ENCODE measurements at regions of chr1 and their contacts with region 1.

Region 1: GRCh38 chr1:12040457-12041051 is 21.3 kb downstream of the MIIP start:
- DNase-seq: peak; percentile 79
- ATAC-seq: peak; percentile 80
- H3K4me3 ChIP-seq: peak overlapping the region; percentile 21; the same call in 1 of the 2 replicates
- H3K27ac ChIP-seq: peak overlapping the region; percentile 68
- H3K4me1 ChIP-seq: peaks cover 53% of the 10 kb centered on the region
- H3K27me3 ChIP-seq: no peaks in the 10 kb centered on the region
- CTCF ChIP-seq: no peak
- EP300 ChIP-seq: peak; percentile 51 to 60; a peak in 3 of 4 replicates
- POLR2A ChIP-seq: peak; percentile 46; the same call in 1 of the 2 replicates
- RAD21 ChIP-seq: peak; percentile 9; the same call in 1 of the 2 replicates

Region 2: GRCh38 chr1:12001249-12001917 is 39.2 kb before region 1 on chr1:
- CTCF ChIA-PET with region 1: interaction called, 4 read pairs
- POLR2A ChIA-PET with region 1: interaction called, 4 read pairs
- RAD21 ChIA-PET with region 1: interaction called, 13 read pairs
- SMC1A ChIA-PET with region 1: interaction called, 5 read pairs
- in situ Hi-C with region 1: no loop called
- intact Hi-C with region 1: no loop called
- DNase-seq: no peak
- ATAC-seq: peak; percentile 27
- H3K4me3 ChIP-seq: no peak overlapping the region
- H3K27ac ChIP-seq: no peak overlapping the region
- H3K4me1 ChIP-seq: peaks cover 22% of the 10 kb centered on the region
- H3K27me3 ChIP-seq: no peaks in the 10 kb centered on the region
- CTCF ChIP-seq: peak; percentile 64 to 73 (median 67)
- EP300 ChIP-seq: no peak
- POLR2A ChIP-seq: no peak
- RAD21 ChIP-seq: peak; percentile 70

Region 3: GRCh38 chr1:12019858-12020509 is 20.6 kb before region 1 on chr1:
- CTCF ChIA-PET with region 1: interaction called, 26 read pairs
- POLR2A ChIA-PET with region 1: interaction called, 49 read pairs
- RAD21 ChIA-PET with region 1: interaction called, 37 read pairs
- SMC1A ChIA-PET with region 1: interaction called, 36 read pairs
- in situ Hi-C with region 1: no loop called
- intact Hi-C with region 1: loop called (anchors 2 kb)
- DNase-seq: no peak
- ATAC-seq: peak; percentile 17
- H3K4me3 ChIP-seq: peak overlapping the region; percentile 88
- H3K27ac ChIP-seq: peak overlapping the region; percentile 86
- H3K4me1 ChIP-seq: peaks cover 4% of the 10 kb centered on the region; the same call in 1 of the 2 replicates
- H3K27me3 ChIP-seq: no peaks in the 10 kb centered on the region
- CTCF ChIP-seq: no peak
- EP300 ChIP-seq: no peak
- POLR2A ChIP-seq: no peak
- RAD21 ChIP-seq: no peak

Region 4: DNA sequence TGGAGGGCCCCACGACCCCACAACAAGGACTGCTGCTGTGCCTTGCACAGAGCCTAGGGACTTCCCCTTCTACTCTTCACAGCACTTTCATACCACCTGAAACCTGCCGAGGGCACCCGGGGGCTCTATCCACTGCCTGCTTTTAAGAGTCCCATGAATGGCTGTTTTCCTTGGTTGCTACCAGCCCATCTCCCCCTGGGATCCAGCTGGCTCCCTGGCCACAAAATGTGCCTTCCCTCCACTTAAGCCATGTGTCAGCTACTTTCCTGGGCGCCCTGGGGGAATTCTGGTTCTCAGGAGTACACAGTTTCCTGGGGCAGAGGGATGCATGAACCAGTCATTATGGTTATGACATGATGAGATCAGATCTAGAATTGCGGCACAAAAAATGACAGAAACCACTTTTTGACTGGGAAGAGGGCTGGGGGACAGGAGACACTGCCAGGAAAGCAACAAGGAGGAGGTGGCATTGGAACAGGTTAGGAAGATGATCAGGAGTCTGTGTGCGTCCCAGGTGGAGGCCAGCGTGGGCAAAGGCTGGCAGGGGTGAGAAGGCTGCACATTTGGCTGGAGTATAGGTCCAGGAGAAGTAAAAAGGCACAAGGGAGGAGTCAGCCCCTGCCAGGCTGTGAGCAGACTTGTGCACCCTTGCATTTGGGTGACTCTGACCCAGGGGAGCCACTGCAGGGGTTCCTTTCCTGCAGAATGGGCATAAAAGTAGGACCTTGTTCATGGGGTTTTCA is 19.3 kb after region 1 on chr1:
- CTCF ChIA-PET with region 1: interaction called, 14 read pairs
- POLR2A ChIA-PET with region 1: interaction called, 154 read pairs
- RAD21 ChIA-PET with region 1: interaction called, 167 read pairs
- SMC1A ChIA-PET with region 1: interaction called, 209 read pairs
- in situ Hi-C with region 1: no loop called
- intact Hi-C with region 1: loop called (anchors 1 kb)
- DNase-seq: no peak
- ATAC-seq: peak; percentile 64
- H3K4me3 ChIP-seq: peak overlapping the region; percentile 36; the same call in 1 of the 2 replicates
- H3K27ac ChIP-seq: peak overlapping the region; percentile 62
- H3K4me1 ChIP-seq: peaks cover 56% of the 10 kb centered on the region
- H3K27me3 ChIP-seq: no peaks in the 10 kb centered on the region
- CTCF ChIP-seq: 0 out of 6 replicates have a peak, but pooled peaks of 1 of the 3 experiments have one; percentile 0
- EP300 ChIP-seq: no peak
- POLR2A ChIP-seq: no peak
- RAD21 ChIP-seq: no peak

Region 5: GRCh38 chr1:12067900-12068821 is 27.6 kb after region 1 on chr1:
- CTCF ChIA-PET with region 1: interaction called, 24 read pairs
- POLR2A ChIA-PET with region 1: interaction called, 154 read pairs
- RAD21 ChIA-PET with region 1: interaction called, 167 read pairs
- SMC1A ChIA-PET with region 1: interaction called, 209 read pairs
- in situ Hi-C with region 1: no loop called
- intact Hi-C with region 1: loop called (anchors 1 kb)
- DNase-seq: peak; percentile 91
- ATAC-seq: peak; percentile 56
- H3K4me3 ChIP-seq: peak overlapping the region; percentile 86
- H3K27ac ChIP-seq: peak overlapping the region; percentile 91
- H3K4me1 ChIP-seq: peaks cover 39% of the 10 kb centered on the region
- H3K27me3 ChIP-seq: no peaks in the 10 kb centered on the region
- CTCF ChIP-seq: no peak
- EP300 ChIP-seq: peak; percentile 45 to 83; a peak in 3 of 4 replicates
- POLR2A ChIP-seq: peak; percentile 67
- RAD21 ChIP-seq: no peak

Region 6: DNA sequence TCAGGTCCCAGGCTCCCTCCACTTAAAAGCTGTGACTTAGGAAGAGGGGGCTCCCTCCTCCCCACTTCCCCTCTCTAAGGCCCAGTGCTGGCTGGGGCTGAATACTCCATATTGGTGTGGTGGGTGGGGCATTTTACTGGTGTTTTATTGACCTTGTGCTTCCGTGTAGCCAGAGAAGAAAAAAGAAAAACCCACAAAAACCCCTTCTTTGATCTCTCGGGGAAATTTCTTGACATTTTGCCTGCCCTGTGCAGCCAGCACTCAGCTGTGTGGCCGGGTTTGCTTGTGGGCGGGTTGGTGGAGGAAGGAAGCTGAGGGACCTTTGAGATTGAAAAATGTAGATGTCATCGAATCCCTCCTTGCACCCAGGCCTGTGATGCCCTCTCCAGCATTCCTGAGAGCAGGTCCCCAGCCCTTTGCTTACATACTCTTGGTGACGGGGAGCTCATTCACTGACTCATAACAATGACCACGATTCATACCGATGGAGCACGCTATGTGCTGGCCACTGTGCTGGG is 47.3 kb after region 1 on chr1:
- CTCF ChIA-PET with region 1: interaction called, 3 read pairs
- POLR2A ChIA-PET with region 1: interaction called, 6 read pairs
- RAD21 ChIA-PET with region 1: interaction called, 11 read pairs
- SMC1A ChIA-PET with region 1: interaction called, 4 read pairs
- in situ Hi-C with region 1: no loop called
- intact Hi-C with region 1: no loop called
- DNase-seq: peak; percentile 76
- ATAC-seq: peak; percentile 91
- H3K4me3 ChIP-seq: no peak overlapping the region
- H3K27ac ChIP-seq: peak overlapping the region; percentile 67
- H3K4me1 ChIP-seq: peaks cover 22% of the 10 kb centered on the region
- H3K27me3 ChIP-seq: no peaks in the 10 kb centered on the region
- CTCF ChIP-seq: no peak
- EP300 ChIP-seq: peak; percentile 10 to 56; a peak in 1 of 4 replicates
- POLR2A ChIP-seq: no peak
- RAD21 ChIP-seq: no peak

Region 7: GRCh38 chr1:12124693-12125421 is 84.3 kb after region 1 on chr1:
- CTCF ChIA-PET with region 1: no interaction called
- POLR2A ChIA-PET with region 1: no interaction called
- RAD21 ChIA-PET with region 1: no interaction called
- SMC1A ChIA-PET with region 1: no interaction called
- in situ Hi-C with region 1: no loop called
- intact Hi-C with region 1: no loop called
- DNase-seq: no peak
- ATAC-seq: peak; percentile 67
- H3K4me3 ChIP-seq: no peak overlapping the region
- H3K27ac ChIP-seq: no peak overlapping the region
- H3K4me1 ChIP-seq: no peaks in the 10 kb centered on the region
- H3K27me3 ChIP-seq: no peaks in the 10 kb centered on the region
- CTCF ChIP-seq: peak; percentile 89 to 95 (median 89)
- EP300 ChIP-seq: no peak
- POLR2A ChIP-seq: no peak
- RAD21 ChIP-seq: peak; percentile 94

Measured in GM12878 (cell line).